K562 (cell line): ENCODE measurements at regions of chr20 and their contacts with region 1.

Region 1: GRCh38 chr20:2349818-2350508 is 30.7 kb upstream of the TGM6 start:
- DNase-seq: no peak
- ATAC-seq: no peak
- H3K4me3 ChIP-seq: no peak overlapping the region
- H3K27ac ChIP-seq: no peak overlapping the region
- H3K4me1 ChIP-seq: no peaks in the 10 kb centered on the region; a peak in 2 of 5 replicates
- H3K27me3 ChIP-seq: no peaks in the 10 kb centered on the region; a peak in 1 of 5 replicates
- CTCF ChIP-seq: no peak
- EP300 ChIP-seq: no peak
- POLR2A ChIP-seq: no peak
- RAD21 ChIP-seq: no peak

Region 2: GRCh38 chr20:2301164-2301622 is 48.8 kb before region 1 on chr20:
- CTCF ChIA-PET with region 1: no interaction called
- POLR2A ChIA-PET with region 1: no interaction called
- in situ Hi-C with region 1: no loop called
- intact Hi-C with region 1: loop called (anchors 5 kb)
- DNase-seq: peak; percentile 28 to 53 (median 34)
- ATAC-seq: peak; percentile 58
- H3K4me3 ChIP-seq: no peak overlapping the region
- H3K27ac ChIP-seq: no peak overlapping the region
- H3K4me1 ChIP-seq: peaks cover 0 to 9% of the 10 kb centered on the region in 2 experiments; a peak in 3 of 5 replicates
- H3K27me3 ChIP-seq: peaks cover 0 to 7% of the 10 kb centered on the region in 2 experiments; a peak in 1 of 5 replicates
- CTCF ChIP-seq: no peak
- EP300 ChIP-seq: no peak
- POLR2A ChIP-seq: no peak
- RAD21 ChIP-seq: no peak